ENCODE measurements at regions of chr3 and their contacts with region 1.

Region 1: DNA sequence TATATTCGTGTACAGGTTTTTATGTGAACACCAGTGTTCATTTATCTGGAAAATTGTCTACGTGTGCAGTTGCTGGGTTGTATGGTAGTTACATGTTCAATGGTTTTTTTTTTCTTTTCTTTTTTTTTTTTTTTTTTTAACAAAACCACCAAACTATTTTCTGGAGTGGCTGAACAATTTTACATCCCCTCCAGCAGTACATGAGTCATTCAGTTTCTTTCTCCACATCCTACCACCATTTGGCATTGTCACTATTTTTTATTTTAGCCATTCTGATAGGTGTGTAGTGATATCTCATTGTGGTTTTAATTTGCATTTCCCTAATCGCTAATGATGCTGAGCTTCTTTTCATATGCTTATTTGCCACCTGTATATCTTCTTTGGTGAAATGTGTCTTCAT is 256.3 kb upstream of the EOMES start:
- DNase-seq: no peak
- ATAC-seq: no peak
- H3K4me3 ChIP-seq: no peak overlapping the region
- H3K4me3 Mint-ChIP-seq: no peak overlapping the region
- H3K27ac ChIP-seq: no peak overlapping the region
- H3K27ac Mint-ChIP-seq: no peak overlapping the region
- H3K4me1 ChIP-seq: no peaks in the 10 kb centered on the region
- H3K4me1 Mint-ChIP-seq: peaks cover 0 to 2% (median 0%) of the 10 kb centered on the region in 7 donors
- H3K27me3 ChIP-seq: no peaks in the 10 kb centered on the region
- H3K27me3 Mint-ChIP-seq: no peaks in the 10 kb centered on the region

Region 2: GRCh38 chr3:27960133-27960532 is 18.3 kb before region 1 on chr3:
- CTCF ChIA-PET with region 1: no interaction called
- POLR2A ChIA-PET with region 1: interaction called, 10 read pairs
- intact Hi-C with region 1: no loop called
- DNase-seq: no peak
- ATAC-seq: no peak
- H3K4me3 ChIP-seq: no peak overlapping the region
- H3K4me3 Mint-ChIP-seq: no peak overlapping the region
- H3K27ac ChIP-seq: no peak overlapping the region
- H3K27ac Mint-ChIP-seq: no peak overlapping the region
- H3K4me1 ChIP-seq: no peaks in the 10 kb centered on the region
- H3K4me1 Mint-ChIP-seq: peaks cover 0 to 7% (median 4%) of the 10 kb centered on the region in 7 donors
- H3K27me3 ChIP-seq: no peaks in the 10 kb centered on the region
- H3K27me3 Mint-ChIP-seq: no peaks in the 10 kb centered on the region